Prostate gland (tissue), 2 donors: ENCODE measurements at regions of chr2 and their contacts with region 1.

Region 1: GRCh38 chr2:66686755-66687154 is 251.8 kb downstream of the MEIS1 start:
- DNase-seq: no peak
- H3K4me3 ChIP-seq: no peak overlapping the region
- H3K27ac ChIP-seq: peak overlapping the region; percentile 17 to 58
- H3K4me1 ChIP-seq: no peaks in the 10 kb centered on the region
- H3K27me3 ChIP-seq: no peaks in the 10 kb centered on the region
- CTCF ChIP-seq: no peak
- POLR2A ChIP-seq: no peak

Region 2: GRCh38 chr2:66569321-66569851 is 117.4 kb before region 1 on chr2:
- intact Hi-C with region 1: no loop called
- DNase-seq: no peak
- H3K4me3 ChIP-seq: no peak overlapping the region
- H3K27ac ChIP-seq: no peak overlapping the region
- H3K4me1 ChIP-seq: no peaks in the 10 kb centered on the region
- H3K27me3 ChIP-seq: no peaks in the 10 kb centered on the region
- CTCF ChIP-seq: no peak
- POLR2A ChIP-seq: no peak

Region 3: GRCh38 chr2:66581339-66582103 is 105.2 kb before region 1 on chr2:
- intact Hi-C with region 1: loop called (anchors 2 kb)
- DNase-seq: no peak
- H3K4me3 ChIP-seq: peak overlapping the region; percentile 12 to 22
- H3K27ac ChIP-seq: peak overlapping the region; percentile 79 to 89
- H3K4me1 ChIP-seq: no peaks in the 10 kb centered on the region
- H3K27me3 ChIP-seq: peaks cover 18% of the 10 kb centered on the region
- CTCF ChIP-seq: no peak
- POLR2A ChIP-seq: no peak

Region 4: DNA sequence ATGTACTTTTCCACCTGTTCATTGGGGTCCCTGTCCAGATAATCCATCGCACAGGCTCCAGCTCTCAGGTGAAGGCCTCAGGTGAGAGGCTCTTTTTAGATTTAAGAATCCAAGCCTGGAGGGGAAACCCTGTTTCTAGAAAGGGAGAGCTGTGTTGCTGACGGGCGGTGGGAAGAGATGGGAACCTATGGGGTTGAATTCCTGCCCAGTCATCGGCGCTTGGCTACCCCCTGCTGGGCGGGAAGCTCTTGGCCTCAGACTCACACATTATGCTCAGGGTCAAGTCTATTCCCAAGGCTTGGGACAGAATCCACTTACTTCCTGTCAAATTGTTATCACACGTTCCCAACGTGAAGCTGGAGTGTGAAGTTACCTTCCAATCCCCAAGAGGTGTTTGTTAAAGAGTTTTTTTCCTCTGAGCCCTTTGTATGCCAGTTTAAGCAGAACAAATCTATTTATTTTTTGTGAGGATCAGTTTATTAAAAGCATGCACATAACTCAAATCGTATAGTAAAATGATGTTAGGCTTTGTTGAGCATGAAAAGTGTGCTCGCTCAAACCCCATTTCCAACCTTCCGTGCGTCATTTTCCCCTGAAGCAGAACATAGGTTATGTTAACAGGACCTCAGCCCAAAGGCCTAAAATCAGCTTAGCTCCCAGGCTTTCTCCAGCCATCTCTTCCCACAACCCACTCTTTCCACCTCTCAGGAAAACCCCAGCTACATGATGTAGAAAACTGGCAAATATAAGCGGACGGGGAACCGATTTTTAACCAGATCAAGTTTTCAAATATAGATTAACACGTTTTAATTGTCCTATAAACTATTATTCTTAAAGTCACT is 528.7 kb after region 1 on chr2:
- intact Hi-C with region 1: loop called (anchors 5 kb)
- DNase-seq: no peak
- H3K4me3 ChIP-seq: no peak overlapping the region
- H3K27ac ChIP-seq: no peak overlapping the region
- H3K4me1 ChIP-seq: no peaks in the 10 kb centered on the region
- H3K27me3 ChIP-seq: no peaks in the 10 kb centered on the region
- CTCF ChIP-seq: peak in 3 of 4 experiments; percentile 25 to 32 (median 30)
- POLR2A ChIP-seq: no peak

Region 5: DNA sequence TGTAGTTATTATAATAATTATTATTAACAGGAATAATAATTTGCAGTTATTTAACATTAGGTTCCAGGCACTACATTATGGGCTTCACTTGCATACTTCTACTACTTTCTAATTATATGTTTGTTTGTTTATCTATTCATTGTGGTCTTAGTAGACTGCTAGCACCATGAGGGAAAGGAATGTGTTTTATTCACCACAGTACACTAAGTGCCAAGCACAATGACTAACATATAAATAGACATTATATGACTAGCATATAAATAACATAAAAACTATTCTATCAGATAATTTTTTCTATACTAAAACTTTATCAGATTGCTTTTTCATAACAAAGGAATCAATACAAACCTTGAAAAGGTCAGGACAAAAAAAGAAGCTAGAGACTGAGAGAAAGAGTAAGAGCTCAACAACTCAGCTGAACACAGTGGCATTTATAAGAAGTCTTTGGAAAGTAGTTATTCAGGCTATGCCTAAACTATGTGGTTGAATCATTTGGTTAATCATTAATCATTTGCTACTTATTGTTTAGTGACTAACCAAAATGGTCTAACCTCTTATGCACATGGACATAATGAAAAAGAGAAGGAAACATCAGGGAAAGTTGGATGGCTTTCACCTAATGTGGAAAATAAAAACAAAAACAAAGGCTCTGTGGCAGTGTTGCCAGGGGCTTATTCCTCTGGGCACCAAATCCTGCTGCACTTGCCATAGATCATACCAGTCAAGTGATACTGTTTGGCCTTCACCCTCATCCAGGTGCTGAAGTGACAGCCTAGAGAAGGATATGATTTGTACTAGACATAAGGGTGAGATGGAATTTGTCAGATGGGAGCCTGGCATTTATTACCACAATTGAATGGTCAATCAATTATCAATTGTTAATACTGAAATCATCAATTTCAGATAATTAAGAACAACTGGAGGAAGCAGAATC is 885.3 kb after region 1 on chr2:
- intact Hi-C with region 1: no loop called
- DNase-seq: no peak
- H3K4me3 ChIP-seq: no peak overlapping the region
- H3K27ac ChIP-seq: peak overlapping the region in 1 of 2 donors; percentile 2
- H3K4me1 ChIP-seq: no peaks in the 10 kb centered on the region
- H3K27me3 ChIP-seq: no peaks in the 10 kb centered on the region
- CTCF ChIP-seq: no peak
- POLR2A ChIP-seq: no peak